PC-9 (cell line): ENCODE measurements at regions of chr2 and their contacts with region 1.

Region 1: DNA sequence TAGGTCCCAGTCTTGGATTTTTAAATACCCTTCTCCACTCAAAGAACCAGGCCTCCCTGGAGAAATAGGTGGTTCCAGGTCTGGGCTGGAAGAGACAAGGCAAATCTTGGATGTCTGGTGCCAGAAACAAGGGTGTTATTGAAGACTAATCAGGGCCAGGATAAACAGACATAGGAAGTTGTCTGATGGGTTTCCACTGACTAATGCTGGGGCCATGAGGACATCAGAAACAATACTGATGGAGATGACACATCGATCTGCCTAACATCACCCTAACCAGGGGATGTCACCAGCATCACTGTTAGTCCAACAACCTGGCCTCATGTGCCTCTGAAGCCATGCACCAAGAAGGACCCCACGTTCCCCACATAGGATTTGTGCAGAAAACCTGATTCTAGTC is 42.5 kb upstream of the GLI2 start:
- DNase-seq: no peak
- H3K4me3 ChIP-seq: no peak overlapping the region
- H3K27ac ChIP-seq: no peak overlapping the region
- H3K4me1 ChIP-seq: no peaks in the 10 kb centered on the region
- H3K27me3 ChIP-seq: peaks cover 68% of the 10 kb centered on the region
- CTCF ChIP-seq: no peak

Region 2: DNA sequence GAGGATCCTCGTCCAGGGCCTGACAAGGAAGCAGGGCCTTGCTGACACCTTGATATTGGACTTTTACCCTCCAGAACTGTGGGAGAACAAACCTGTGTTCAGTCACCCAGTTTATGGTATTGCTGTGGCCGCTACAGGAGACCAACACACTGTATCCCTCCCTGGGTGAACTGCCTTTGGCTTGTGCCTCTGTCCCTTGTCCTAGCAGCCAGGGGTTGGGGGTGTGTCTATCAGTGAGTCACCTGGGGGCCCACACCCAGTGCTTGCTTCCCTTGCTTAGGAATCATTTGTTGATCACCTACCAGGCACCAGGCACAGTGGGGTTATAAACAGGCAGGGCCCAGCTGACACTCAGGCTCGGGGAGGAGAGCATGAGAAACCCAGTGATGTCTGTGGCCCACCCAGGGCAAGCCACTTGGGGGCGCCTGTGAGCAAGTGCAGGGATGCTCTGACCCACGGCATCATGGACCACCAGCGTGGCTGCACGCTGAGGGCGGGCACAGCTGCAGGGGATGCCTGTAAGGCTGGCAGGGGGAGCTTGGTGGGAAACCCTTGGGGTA is 487.0 kb before region 1 on chr2:
- CTCF ChIA-PET with region 1: no interaction called
- POLR2A ChIA-PET with region 1: no interaction called
- intact Hi-C with region 1: no loop called
- DNase-seq: no peak
- H3K4me3 ChIP-seq: no peak overlapping the region
- H3K27ac ChIP-seq: no peak overlapping the region
- H3K4me1 ChIP-seq: no peaks in the 10 kb centered on the region
- H3K27me3 ChIP-seq: no peaks in the 10 kb centered on the region
- CTCF ChIP-seq: peak; percentile 49; the same call in 1 of the 2 replicates

Region 3: DNA sequence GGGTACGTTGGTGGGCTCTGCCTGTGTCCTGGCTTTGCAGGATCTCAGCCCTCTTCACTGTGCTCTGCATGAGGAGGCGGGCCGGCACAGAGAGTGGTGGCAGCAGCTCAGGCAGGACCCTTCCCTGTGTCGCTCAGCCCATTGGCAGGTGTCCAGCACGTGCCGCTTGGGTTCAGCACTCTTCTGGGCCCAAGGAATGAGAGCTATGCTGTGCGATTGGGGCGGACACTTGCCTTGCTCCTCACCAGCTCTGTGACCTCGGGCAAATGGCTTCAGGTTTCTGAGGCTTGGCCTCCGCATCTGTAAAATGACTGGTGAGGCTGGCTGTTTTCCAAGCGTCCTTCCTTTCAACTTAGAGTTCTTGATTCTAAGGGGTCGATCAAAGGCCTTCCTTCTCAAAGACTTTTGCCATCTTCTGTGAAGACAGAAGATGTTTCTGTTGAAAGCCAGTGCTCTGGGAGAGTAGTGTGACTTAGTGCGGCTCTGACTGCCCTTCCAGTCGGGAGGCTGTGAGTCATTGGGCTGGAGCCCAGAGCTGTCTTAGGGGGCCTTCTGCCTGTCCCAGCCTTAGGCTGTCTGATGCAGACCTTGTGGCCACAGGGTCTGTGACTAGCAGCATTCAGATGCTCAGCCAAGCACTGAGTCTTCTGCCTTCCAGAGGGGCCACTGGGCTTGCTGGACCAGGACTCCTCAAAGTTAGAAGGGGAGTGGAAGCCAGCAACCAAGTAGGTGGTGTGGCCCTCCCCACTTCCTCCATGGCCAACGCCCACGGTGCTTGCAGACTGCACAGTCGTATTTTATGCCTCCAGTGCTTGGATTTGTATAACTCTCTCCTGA is 78.2 kb after region 1 on chr2:
- CTCF ChIA-PET with region 1: interaction called, 4 read pairs
- POLR2A ChIA-PET with region 1: no interaction called
- intact Hi-C with region 1: loop called (anchors 1 kb)
- DNase-seq: peak in 1 of 2 experiments; percentile 76
- H3K4me3 ChIP-seq: no peak overlapping the region
- H3K27ac ChIP-seq: no peak overlapping the region
- H3K4me1 ChIP-seq: no peaks in the 10 kb centered on the region
- H3K27me3 ChIP-seq: peaks cover 25% of the 10 kb centered on the region
- CTCF ChIP-seq: no peak

Region 4: GRCh38 chr2:120914839-120915521 is 221.9 kb after region 1 on chr2:
- CTCF ChIA-PET with region 1: no interaction called
- POLR2A ChIA-PET with region 1: no interaction called
- intact Hi-C with region 1: loop called (anchors 1 kb)
- DNase-seq: peak; percentile 46 to 87
- H3K4me3 ChIP-seq: no peak overlapping the region
- H3K27ac ChIP-seq: no peak overlapping the region
- H3K4me1 ChIP-seq: peaks cover 21% of the 10 kb centered on the region
- H3K27me3 ChIP-seq: no peaks in the 10 kb centered on the region
- CTCF ChIP-seq: no peak

Region 5: GRCh38 chr2:120949027-120949956 is 256.2 kb after region 1 on chr2:
- CTCF ChIA-PET with region 1: no interaction called
- POLR2A ChIA-PET with region 1: no interaction called
- intact Hi-C with region 1: loop called (anchors 1 kb)
- DNase-seq: peak in 1 of 2 experiments; percentile 33
- H3K4me3 ChIP-seq: no peak overlapping the region
- H3K27ac ChIP-seq: no peak overlapping the region
- H3K4me1 ChIP-seq: no peaks in the 10 kb centered on the region
- H3K27me3 ChIP-seq: no peaks in the 10 kb centered on the region
- CTCF ChIP-seq: peak; percentile 64

Region 6: GRCh38 chr2:121071034-121071504 is 377.9 kb after region 1 on chr2:
- CTCF ChIA-PET with region 1: interaction called, 9 read pairs
- POLR2A ChIA-PET with region 1: interaction called, 11 read pairs
- intact Hi-C with region 1: loop called (anchors 1 kb)
- DNase-seq: peak in 1 of 2 experiments; percentile 84
- H3K4me3 ChIP-seq: no peak overlapping the region
- H3K27ac ChIP-seq: no peak overlapping the region
- H3K4me1 ChIP-seq: peaks cover 14% of the 10 kb centered on the region; the same call in 1 of the 2 replicates
- H3K27me3 ChIP-seq: peaks cover 17% of the 10 kb centered on the region
- CTCF ChIP-seq: peak; percentile 98

Region 7: DNA sequence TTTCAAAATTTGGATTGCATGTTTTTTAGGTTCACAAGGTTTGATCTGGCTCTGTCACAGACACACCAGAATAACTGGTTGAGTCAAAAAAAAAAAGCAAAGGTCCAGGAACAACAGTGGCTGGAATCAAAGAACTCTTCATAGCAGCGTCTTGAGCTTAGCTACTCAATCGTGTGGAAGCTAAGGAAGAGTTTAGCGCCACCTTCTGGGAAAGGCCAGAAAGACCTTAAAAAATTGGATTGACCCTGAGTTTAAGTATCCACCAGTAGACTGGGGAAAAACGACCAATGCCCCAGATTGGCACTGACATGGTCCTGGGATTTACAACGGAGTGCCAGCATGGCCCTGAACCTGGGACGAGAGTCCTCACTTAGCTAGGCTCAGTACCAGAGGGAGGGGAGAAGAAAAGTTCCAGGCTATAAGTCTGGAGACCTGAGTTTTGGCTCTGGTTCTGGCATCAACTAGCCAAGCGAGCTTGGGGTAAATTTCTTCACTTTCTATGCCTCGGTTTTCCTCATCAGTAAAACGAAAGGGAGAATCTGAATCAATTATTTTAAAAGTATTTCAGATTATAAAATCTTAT is 663.0 kb after region 1 on chr2:
- CTCF ChIA-PET with region 1: no interaction called
- POLR2A ChIA-PET with region 1: no interaction called
- intact Hi-C with region 1: loop called (anchors 10 kb)
- DNase-seq: peak; percentile 56 to 72
- H3K4me3 ChIP-seq: no peak overlapping the region
- H3K27ac ChIP-seq: no peak overlapping the region
- H3K4me1 ChIP-seq: peaks cover 12% of the 10 kb centered on the region
- H3K27me3 ChIP-seq: no peaks in the 10 kb centered on the region
- CTCF ChIP-seq: peak; percentile 92